K562 (cell line): ENCODE measurements at regions of chr3 and their contacts with region 1.

Region 1: DNA sequence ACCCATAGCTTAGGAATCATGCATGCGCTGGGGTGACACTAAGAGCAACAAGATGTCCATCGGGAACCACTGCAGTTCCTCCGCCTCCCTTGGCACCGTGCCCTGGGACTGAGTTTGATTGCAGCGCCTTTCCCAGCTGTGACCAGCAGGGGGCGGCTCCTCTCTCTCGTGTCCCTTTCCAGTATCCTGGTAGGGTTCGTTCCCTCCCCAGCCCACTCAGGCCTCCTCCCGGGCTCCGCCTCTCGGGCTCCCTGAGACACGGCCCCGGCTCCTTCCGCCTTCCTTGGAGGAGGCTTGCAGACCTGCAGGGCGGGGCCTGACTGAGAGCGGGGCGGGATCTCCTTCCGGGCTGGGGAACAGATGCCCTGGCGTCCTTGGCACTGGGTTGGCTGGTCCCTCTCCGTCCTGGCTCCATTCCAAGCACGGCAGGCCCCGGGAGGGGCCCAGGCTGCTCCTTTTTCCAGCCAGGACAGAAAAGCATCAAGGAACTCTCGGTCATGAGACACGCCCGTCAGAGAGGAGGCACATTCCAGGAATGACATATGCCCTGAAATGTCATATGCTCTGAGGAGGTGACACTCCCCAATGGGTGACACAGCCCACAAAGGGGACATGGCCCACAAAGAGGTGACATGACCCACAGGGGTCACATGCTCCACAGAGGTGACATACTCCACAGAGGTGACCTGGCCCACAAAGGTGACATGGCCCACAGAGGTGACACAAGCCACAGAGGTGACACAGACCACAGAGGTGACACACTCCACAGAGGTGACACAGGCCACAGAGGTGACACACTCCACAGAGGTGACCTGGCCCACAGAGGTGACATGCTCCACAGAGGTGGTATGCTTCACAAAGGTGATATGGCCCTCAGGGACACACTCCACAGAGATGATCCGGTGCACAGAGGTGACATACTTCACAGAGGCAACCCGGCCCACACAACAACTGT is 79.0 kb downstream of the ABHD5 start:
- DNase-seq: peak; percentile 97 to 99 (median 99)
- ATAC-seq: peak; percentile 98
- H3K4me3 ChIP-seq: peak overlapping the region; percentile 25
- H3K27ac ChIP-seq: peak overlapping the region; percentile 88
- H3K4me1 ChIP-seq: peaks cover 40 to 45% of the 10 kb centered on the region in 2 experiments
- H3K27me3 ChIP-seq: no peaks in the 10 kb centered on the region
- CTCF ChIP-seq: peak; percentile 96 to 100 (median 99)
- EP300 ChIP-seq: peak; percentile 11; the same call in 1 of the 2 replicates
- POLR2A ChIP-seq: 0 out of 2 replicates have a peak, but pooled peaks have one; percentile 39
- RAD21 ChIP-seq: peak; percentile 94

Region 2: DNA sequence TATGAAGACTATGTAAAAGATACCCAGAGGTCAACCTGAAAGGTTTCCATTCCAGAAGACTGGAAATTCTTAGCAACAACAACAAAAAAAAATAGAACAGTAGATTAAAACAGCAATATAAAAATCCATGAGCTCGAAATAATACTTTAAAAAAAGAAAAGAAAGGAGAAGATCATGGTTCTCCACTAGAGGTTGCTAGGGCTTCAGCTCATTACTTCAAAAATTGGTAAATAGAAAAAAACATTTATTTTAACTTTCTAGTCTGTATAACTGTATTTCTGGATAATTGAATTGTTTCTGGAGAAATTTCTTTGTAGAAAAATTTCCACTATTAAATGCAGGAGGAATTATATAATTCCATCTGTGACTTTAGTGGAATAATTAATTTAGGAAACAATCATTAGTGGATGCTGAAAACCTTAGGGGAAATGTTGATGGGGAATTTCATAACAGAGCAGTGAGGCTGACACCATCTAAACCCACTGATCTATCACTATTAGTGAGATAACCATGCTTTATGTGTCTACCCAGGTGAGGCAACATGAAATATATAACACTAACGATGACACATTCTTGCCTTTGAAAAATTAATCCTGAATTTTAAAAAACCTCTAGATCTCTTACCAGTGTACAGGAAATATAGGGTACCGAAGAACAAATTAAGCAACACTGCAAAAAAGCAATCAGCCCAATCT is 545.9 kb before region 1 on chr3:
- CTCF ChIA-PET with region 1: no interaction called
- POLR2A ChIA-PET with region 1: no interaction called
- in situ Hi-C with region 1: no loop called
- intact Hi-C with region 1: loop called (anchors 10 kb)
- DNase-seq: no peak
- ATAC-seq: no peak
- H3K4me3 ChIP-seq: no peak overlapping the region
- H3K27ac ChIP-seq: no peak overlapping the region
- H3K4me1 ChIP-seq: no peaks in the 10 kb centered on the region
- H3K27me3 ChIP-seq: peaks cover 5 to 18% of the 10 kb centered on the region in 2 experiments; a peak in 4 of 5 replicates
- CTCF ChIP-seq: peak in 2 of 3 experiments; percentile 14 to 68; a peak in 4 of 6 replicates
- EP300 ChIP-seq: no peak
- POLR2A ChIP-seq: no peak
- RAD21 ChIP-seq: peak; percentile 66 to 73

Region 3: DNA sequence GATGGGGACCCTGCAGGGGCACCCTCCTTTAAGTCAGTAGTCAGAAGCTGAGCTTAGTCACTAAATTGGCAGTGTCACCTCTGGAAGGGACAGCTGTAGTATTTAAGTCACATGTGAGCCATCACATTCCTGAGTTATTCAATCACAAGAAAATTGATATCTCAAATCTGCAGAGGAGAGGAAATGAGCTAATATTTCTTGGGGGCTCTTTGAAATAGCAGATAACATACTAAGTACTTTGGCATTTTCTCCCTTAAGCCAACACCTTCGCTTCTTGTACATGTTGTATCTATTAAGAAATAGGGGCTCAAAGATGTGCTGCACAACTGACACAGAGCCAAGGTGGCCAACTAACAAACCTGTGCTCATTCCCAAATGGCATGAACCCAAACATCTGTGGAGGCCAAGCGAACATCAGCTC is 16.0 kb before region 1 on chr3:
- CTCF ChIA-PET with region 1: no interaction called
- POLR2A ChIA-PET with region 1: interaction called, 13 read pairs
- in situ Hi-C with region 1: no loop called
- intact Hi-C with region 1: no loop called
- DNase-seq: no peak
- ATAC-seq: no peak
- H3K4me3 ChIP-seq: no peak overlapping the region
- H3K27ac ChIP-seq: no peak overlapping the region
- H3K4me1 ChIP-seq: peaks cover 0 to 8% of the 10 kb centered on the region in 2 experiments; a peak in 1 of 5 replicates
- H3K27me3 ChIP-seq: no peaks in the 10 kb centered on the region; a peak in 1 of 5 replicates
- CTCF ChIP-seq: no peak
- EP300 ChIP-seq: no peak
- POLR2A ChIP-seq: no peak
- RAD21 ChIP-seq: no peak

Region 4: GRCh38 chr3:43926055-43926454 is 156.3 kb after region 1 on chr3:
- CTCF ChIA-PET with region 1: no interaction called
- POLR2A ChIA-PET with region 1: no interaction called
- in situ Hi-C with region 1: no loop called
- intact Hi-C with region 1: loop called (anchors 5 kb)
- DNase-seq: peak in 2 of 4 experiments; percentile 9 to 25
- ATAC-seq: peak; percentile 69
- H3K4me3 ChIP-seq: no peak overlapping the region
- H3K27ac ChIP-seq: no peak overlapping the region
- H3K4me1 ChIP-seq: no peaks in the 10 kb centered on the region
- H3K27me3 ChIP-seq: peaks cover 4 to 30% of the 10 kb centered on the region in 2 experiments; a peak in 3 of 5 replicates
- CTCF ChIP-seq: peak; percentile 18 to 40 (median 30); a peak in 4 of 6 replicates
- EP300 ChIP-seq: no peak
- POLR2A ChIP-seq: no peak
- RAD21 ChIP-seq: no peak

Region 5: DNA sequence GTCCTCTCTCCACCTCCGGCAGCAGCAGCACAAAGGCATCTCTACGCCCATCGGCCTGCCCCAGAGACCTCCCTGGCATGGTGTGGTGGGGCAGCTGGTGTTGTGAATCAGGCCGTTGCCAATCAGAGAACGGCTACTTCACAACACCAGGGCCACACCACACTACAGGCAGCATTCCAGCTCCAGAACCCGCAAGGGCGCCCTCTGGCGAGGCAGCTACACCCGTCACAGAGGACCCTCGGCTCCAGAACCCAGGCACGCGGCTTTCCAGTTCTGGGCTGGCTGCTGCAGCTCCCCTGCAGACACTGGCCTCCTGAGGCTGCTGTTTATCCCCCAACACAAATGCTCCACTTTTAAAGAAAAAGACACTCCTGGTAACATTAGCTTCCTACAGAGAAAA is 344.4 kb after region 1 on chr3:
- CTCF ChIA-PET with region 1: interaction called, 4 read pairs
- POLR2A ChIA-PET with region 1: no interaction called
- in situ Hi-C with region 1: no loop called
- intact Hi-C with region 1: loop called (anchors 5 kb)
- DNase-seq: peak; percentile 69 to 76 (median 74)
- ATAC-seq: peak; percentile 99
- H3K4me3 ChIP-seq: no peak overlapping the region
- H3K27ac ChIP-seq: no peak overlapping the region
- H3K4me1 ChIP-seq: peaks cover 0 to 4% of the 10 kb centered on the region in 2 experiments; a peak in 2 of 5 replicates
- H3K27me3 ChIP-seq: peaks cover 14 to 69% of the 10 kb centered on the region in 2 experiments; a peak in 4 of 5 replicates
- CTCF ChIP-seq: peak; percentile 68 to 87 (median 83)
- EP300 ChIP-seq: no peak
- POLR2A ChIP-seq: no peak
- RAD21 ChIP-seq: peak; percentile 60 to 82

Region 6: GRCh38 chr3:44198284-44199269 is 428.8 kb after region 1 on chr3:
- CTCF ChIA-PET with region 1: no interaction called
- POLR2A ChIA-PET with region 1: no interaction called
- in situ Hi-C with region 1: no loop called
- intact Hi-C with region 1: loop called (anchors 2 kb)
- DNase-seq: peak; percentile 62 to 84 (median 72)
- ATAC-seq: peak; percentile 99
- H3K4me3 ChIP-seq: no peak overlapping the region
- H3K27ac ChIP-seq: no peak overlapping the region
- H3K4me1 ChIP-seq: no peaks in the 10 kb centered on the region; a peak in 1 of 5 replicates
- H3K27me3 ChIP-seq: peaks cover 0 to 7% of the 10 kb centered on the region in 2 experiments; a peak in 2 of 5 replicates
- CTCF ChIP-seq: peak; percentile 84 to 95 (median 88)
- EP300 ChIP-seq: no peak
- POLR2A ChIP-seq: no peak
- RAD21 ChIP-seq: peak; percentile 90 to 92